ENCODE measurements at regions of chr6 and their contacts with region 1.

Region 1: DNA sequence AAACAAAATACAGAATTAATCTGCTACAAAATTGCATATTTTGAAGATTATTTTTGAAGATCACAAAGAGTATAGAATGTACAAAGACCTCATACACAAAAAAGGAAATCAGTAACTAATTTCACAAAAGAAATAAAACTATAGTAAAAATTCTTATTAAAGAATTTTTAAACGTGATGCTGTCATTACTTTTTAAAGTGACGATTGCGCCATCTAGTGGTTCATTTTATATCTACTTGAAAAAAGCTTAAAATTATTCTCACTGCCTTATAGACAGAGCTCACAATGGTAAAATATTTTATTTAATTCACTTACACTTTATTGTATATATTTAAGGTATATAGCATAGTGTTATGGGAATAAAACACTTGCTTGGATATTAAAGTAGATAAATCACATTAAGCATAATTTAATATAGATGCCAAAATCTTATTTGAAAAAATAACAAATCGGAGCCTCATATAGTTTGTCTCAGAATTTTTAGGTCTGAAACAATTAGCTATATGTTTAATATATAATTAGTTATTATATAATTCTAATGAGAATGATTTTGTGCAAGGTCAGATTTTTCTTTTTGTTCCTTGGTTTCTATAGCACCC is 128.8 kb downstream of the PHF3 start:
- DNase-seq: no peak
- CTCF ChIP-seq: peak; percentile 48

Region 2: DNA sequence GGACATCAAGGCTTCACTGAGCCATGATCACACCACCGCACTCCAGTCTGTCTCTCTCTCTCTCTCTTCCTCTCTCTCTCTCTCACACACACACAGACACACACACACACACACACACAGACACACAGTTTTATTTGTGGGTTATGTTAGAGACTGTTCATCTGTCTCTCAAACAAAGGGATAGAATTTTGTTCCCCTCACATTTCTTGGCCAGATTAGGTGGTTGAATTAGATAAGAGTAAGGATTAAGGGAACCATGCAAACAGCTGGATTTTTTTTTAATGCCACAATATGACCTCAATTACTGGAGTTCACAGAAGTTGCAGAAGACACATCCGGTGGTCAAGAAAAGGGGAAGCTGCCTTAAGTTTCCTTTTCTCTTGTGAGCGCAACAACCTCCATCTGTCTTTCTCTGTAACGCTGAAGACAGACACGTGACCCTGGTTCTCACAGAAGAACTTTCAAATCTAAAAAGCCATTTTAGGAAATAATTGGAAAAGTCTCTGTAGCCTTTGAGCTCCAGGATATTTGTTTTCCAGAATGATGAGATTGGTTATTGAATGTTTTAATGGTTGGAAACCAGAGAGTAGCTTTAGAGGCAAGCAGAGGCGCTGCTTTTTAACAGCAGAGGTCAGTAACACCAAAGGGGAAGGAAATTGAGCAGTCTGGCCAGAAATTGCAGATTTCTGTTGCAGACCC is 411.7 kb before region 1 on chr6:
- CTCF ChIA-PET with region 1: interaction called, 33 read pairs
- POLR2A ChIA-PET with region 1: no interaction called
- DNase-seq: peak; percentile 62
- CTCF ChIP-seq: peak; percentile 76

Measured in GM10248 (cell line).